Activated T-helper 1 cell treated with anti-CD3 and anti-CD28 coated beads, Interleukin-12 subunit alpha, Interleukin-12 subunit beta, Interleukin-2, Interleukin-4 antibody, amounts not matched to agents 30 ng/mL and 10 ng/mL and 1 ng/mL, durations not matched to agents 14 hours and 24 hours and 36 hours (primary cell): ENCODE measurements at regions of chr16 and their contacts with region 1.

Region 1: GRCh38 chr16:70653809-70654771 is 7.7 kb downstream of the IL34 start:
- DNase-seq: peak; percentile 72
- H3K4me3 Mint-ChIP-seq: peak overlapping the region; percentile 35
- H3K27ac Mint-ChIP-seq: peak overlapping the region; percentile 16
- H3K4me1 Mint-ChIP-seq: peaks cover 5% of the 10 kb centered on the region
- H3K27me3 Mint-ChIP-seq: peaks cover 5% of the 10 kb centered on the region

Region 2: GRCh38 chr16:70370924-70371323 is 283.2 kb before region 1 on chr16:
- intact Hi-C with region 1: loop called (anchors 1 kb)
- DNase-seq: no peak
- H3K4me3 Mint-ChIP-seq: no peak overlapping the region
- H3K27ac Mint-ChIP-seq: no peak overlapping the region
- H3K4me1 Mint-ChIP-seq: no peaks in the 10 kb centered on the region
- H3K27me3 Mint-ChIP-seq: no peaks in the 10 kb centered on the region

Region 3: DNA sequence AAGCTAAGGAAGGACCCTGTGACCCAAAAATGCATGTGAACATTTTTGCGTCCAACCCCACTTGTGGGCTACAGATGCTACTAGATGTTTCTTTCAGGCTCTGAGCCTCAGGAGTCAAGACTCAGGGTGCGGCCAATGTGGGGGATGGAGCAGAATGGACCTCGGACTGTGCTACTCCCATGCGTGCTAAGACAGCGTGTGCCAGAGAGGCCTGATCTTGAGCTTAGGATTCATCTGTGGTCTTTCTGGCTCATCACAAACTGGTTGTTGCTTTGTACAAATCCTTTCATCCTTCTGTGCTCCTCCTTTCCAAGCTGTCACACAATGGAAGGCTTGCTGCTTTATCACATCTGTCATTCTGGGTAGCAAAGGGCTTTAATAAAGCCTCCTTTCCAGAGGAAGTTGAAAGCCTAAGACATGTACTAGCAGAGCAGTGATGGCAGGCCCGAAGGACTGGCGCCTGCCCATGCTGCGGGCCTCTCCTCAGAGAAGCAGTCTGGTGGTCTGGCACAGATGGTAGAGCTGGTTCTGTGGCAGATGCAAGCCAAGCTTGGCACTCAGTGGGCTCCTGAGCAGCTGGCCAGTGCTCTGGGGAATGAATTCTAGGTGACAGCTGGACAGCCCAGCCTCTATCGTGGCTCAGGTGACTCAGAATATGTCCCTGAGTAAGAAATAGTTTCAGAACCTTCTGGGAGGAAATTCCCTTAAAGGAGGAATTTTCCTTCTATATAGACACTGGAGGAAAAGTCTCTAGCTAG is 158.5 kb before region 1 on chr16:
- intact Hi-C with region 1: no loop called
- DNase-seq: no peak
- H3K4me3 Mint-ChIP-seq: no peak overlapping the region
- H3K27ac Mint-ChIP-seq: no peak overlapping the region
- H3K4me1 Mint-ChIP-seq: peaks cover 17% of the 10 kb centered on the region
- H3K27me3 Mint-ChIP-seq: no peaks in the 10 kb centered on the region

Region 4: DNA sequence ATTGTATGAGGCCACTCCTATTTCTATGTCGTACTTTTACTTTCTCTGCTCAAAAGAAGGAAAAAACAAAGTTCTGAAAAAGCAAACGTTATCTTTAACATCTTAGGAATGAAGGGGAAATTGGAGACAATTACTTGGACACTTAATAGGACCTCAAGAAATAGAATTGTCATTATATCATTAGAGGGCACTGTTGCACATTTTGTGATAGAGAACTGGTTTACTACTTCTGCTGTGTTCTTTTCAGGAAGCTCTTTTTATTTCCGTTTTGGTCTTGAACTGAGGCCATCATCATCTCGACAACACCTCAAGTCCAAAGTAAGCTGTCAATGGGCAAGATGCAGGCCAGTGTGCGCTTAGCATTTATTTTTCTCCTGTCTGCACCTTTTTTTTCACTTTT is 145.3 kb before region 1 on chr16:
- intact Hi-C with region 1: loop called (anchors 5 kb)
- DNase-seq: no peak
- H3K4me3 Mint-ChIP-seq: no peak overlapping the region
- H3K27ac Mint-ChIP-seq: no peak overlapping the region
- H3K4me1 Mint-ChIP-seq: peaks cover 13% of the 10 kb centered on the region
- H3K27me3 Mint-ChIP-seq: no peaks in the 10 kb centered on the region

Region 5: DNA sequence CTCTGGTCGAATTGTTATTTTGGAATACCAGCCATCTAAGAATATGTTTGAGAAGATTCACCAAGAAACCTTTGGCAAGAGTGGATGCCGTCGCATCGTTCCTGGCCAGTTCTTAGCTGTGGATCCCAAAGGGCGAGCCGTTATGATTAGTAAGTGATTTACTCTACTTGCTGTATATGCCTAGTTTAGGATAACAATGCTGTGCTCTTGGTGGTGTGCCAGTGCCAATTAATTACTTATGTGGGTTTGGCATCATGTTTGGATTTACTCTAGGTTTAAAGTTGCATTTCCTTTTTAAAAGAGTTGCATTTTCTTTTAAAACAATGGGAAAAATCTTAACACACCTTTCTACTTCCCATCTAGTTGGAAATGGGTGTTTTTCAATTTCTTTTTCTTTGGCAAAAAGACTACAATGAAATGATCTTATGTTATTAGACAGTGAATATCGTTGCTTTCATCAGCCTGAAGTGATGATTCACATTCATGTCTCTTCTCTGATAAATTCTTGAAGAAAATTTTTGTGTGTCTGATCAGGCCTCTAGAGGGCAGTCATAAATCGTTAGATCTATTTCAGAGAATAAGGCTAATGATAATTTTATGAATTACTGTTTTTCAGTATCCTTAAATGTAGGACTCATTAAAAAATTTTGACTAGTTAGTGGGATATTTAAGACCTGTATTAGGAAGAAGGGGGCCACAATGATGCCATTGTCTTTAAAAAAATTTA is 124.9 kb before region 1 on chr16:
- intact Hi-C with region 1: loop called (anchors 1 kb)
- DNase-seq: no peak
- H3K4me3 Mint-ChIP-seq: peak overlapping the region; percentile 48
- H3K27ac Mint-ChIP-seq: peak overlapping the region; percentile 58
- H3K4me1 Mint-ChIP-seq: peaks cover 57% of the 10 kb centered on the region
- H3K27me3 Mint-ChIP-seq: no peaks in the 10 kb centered on the region

Region 6: DNA sequence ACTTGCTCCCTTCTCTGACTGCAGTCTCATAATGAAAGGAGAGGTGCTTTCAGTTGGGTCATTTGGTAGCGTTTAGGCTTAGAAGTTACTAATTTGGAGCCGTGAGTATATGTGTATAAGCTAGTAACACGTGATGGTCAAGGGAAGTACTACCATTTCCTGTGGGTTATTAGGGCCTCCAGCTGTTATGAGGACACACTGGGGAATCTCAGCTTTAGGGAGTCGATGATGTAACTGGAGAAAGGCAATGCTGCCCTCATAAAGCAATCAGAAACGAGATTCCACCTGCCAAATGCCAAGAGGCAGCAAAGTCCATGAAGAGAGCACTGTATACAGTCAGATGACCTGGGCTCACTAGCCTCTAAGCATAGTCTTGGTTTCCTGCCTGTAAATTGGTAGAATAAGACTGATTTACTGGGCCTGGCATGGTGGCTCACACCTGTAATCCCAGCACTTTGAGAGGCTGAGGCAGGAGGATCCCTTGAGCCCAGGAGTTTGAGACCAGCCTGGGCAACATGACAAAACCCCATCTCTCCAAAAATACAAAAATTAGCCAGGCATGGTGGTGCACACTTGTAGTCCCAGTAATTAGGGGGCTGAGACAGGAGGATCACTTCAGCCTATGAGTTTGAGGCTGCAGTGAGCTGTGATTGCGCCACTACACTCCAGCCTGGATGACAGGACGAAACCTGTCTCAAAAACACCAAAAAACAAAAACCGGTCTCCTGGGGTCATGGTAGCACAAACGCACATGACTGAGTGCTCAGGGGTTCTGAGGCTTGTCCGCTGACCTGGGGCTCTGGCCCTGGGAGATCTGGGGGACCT is 77.4 kb before region 1 on chr16:
- intact Hi-C with region 1: loop called (anchors 1 kb)
- DNase-seq: no peak
- H3K4me3 Mint-ChIP-seq: no peak overlapping the region
- H3K27ac Mint-ChIP-seq: peak overlapping the region; percentile 10
- H3K4me1 Mint-ChIP-seq: peaks cover 17% of the 10 kb centered on the region
- H3K27me3 Mint-ChIP-seq: no peaks in the 10 kb centered on the region

Region 7: DNA sequence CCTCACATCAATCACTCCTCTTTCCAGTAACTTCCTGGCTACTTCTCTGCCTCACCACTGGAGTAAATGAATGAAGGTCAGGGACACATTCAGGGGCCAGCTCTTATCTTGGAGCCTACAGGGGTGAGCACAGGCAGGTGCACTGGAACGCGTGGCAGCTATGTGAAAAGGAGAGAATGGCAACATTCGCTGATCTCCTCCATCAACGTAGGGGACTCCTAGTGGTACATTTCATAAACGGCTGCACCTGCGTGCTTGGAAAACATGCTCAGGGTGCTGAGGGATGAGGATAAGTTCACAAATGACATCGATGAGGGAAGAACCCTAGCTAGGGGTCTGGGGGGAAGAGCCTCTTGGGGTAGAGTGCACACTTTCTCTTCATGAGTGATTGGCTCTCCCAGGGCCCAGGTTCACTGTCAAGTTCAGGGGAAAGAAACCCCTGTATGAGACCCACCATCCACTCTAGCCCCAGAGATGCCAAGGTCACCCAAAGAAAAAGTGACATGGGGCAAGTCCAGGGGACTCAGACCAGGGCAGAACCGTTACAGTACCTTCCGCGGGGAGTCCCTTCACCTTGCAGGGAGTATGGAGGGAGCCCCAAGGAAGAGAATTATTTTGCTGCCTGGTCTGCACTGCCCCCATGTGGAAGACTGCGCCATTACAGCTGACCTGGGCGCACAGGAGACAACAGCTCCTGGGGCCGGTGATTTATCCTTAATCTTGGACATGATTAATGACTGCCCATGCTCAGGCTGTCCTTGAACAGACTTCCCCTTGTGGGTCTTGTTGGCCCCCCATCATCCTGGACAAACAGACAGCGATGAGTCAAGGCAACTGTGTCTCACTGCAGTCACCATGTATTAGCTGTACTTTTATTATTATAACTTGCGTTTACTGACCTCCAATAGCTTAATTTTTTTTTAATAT is 116.8 kb after region 1 on chr16:
- intact Hi-C with region 1: loop called (anchors 1 kb)
- DNase-seq: peak; percentile 45
- H3K4me3 Mint-ChIP-seq: no peak overlapping the region
- H3K27ac Mint-ChIP-seq: no peak overlapping the region
- H3K4me1 Mint-ChIP-seq: peaks cover 9% of the 10 kb centered on the region
- H3K27me3 Mint-ChIP-seq: no peaks in the 10 kb centered on the region